Activated B cell treated with CpG ODN at 0.5 μM for 24 hours (primary cell): ENCODE measurements at regions of chr9 and their contacts with region 1.

Region 1: DNA sequence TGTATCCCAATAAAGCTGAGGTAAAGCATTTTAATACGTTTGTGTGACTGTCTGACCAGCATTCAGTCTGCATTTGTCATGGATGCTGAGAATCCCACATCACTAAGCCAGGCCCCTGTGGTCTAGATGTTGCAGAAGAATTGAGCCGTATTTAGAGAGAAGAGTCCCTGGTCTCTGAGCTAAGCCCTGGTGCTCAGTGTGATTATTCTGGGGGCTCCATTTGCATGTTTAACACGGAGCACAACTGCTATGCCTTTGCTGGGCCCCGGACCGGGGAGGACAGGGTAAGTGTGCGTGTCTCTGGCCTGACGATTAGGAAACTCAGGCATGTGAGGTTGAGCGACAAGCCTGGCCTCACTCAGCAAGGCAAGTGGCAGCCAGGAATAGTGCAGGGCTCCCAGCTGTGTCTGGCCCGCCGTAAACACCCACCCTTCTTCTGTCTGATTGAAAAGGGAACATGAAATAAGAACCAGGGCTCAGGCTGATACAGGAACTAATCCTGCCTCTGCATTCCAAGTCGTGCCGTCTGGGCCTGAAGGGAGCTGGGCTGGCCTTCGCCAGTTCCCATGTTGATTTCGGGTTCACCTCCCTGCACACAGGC is 22.3 kb downstream of the FAM78A start:
- DNase-seq: no peak
- ATAC-seq: peak; percentile 18
- H3K4me3 Mint-ChIP-seq: peak overlapping the region; percentile 72
- H3K27ac Mint-ChIP-seq: peak overlapping the region; percentile 100
- H3K4me1 Mint-ChIP-seq: peaks cover 50% of the 10 kb centered on the region
- H3K27me3 Mint-ChIP-seq: no peaks in the 10 kb centered on the region
- CTCF ChIP-seq: no peak

Region 2: GRCh38 chr9:131237931-131238401 is 16.0 kb before region 1 on chr9:
- CTCF ChIA-PET with region 1: interaction called, 3 read pairs
- POLR2A ChIA-PET with region 1: interaction called, 128 read pairs
- intact Hi-C with region 1: loop called (anchors 1 kb)
- DNase-seq: peak; percentile 58
- ATAC-seq: peak; percentile 97
- H3K4me3 Mint-ChIP-seq: peak overlapping the region; percentile 87
- H3K27ac Mint-ChIP-seq: peak overlapping the region; percentile 96
- H3K4me1 Mint-ChIP-seq: peaks cover 17% of the 10 kb centered on the region
- H3K27me3 Mint-ChIP-seq: no peaks in the 10 kb centered on the region
- CTCF ChIP-seq: no peak

Region 3: GRCh38 chr9:131270171-131271015 is 16.4 kb after region 1 on chr9:
- CTCF ChIA-PET with region 1: interaction called, 9 read pairs
- POLR2A ChIA-PET with region 1: interaction called, 593 read pairs
- intact Hi-C with region 1: loop called (anchors 1 kb)
- DNase-seq: peak; percentile 40
- ATAC-seq: peak; percentile 13
- H3K4me3 Mint-ChIP-seq: peak overlapping the region; percentile 76
- H3K27ac Mint-ChIP-seq: peak overlapping the region; percentile 98
- H3K4me1 Mint-ChIP-seq: peaks cover 88% of the 10 kb centered on the region
- H3K27me3 Mint-ChIP-seq: no peaks in the 10 kb centered on the region
- CTCF ChIP-seq: no peak

Region 4: DNA sequence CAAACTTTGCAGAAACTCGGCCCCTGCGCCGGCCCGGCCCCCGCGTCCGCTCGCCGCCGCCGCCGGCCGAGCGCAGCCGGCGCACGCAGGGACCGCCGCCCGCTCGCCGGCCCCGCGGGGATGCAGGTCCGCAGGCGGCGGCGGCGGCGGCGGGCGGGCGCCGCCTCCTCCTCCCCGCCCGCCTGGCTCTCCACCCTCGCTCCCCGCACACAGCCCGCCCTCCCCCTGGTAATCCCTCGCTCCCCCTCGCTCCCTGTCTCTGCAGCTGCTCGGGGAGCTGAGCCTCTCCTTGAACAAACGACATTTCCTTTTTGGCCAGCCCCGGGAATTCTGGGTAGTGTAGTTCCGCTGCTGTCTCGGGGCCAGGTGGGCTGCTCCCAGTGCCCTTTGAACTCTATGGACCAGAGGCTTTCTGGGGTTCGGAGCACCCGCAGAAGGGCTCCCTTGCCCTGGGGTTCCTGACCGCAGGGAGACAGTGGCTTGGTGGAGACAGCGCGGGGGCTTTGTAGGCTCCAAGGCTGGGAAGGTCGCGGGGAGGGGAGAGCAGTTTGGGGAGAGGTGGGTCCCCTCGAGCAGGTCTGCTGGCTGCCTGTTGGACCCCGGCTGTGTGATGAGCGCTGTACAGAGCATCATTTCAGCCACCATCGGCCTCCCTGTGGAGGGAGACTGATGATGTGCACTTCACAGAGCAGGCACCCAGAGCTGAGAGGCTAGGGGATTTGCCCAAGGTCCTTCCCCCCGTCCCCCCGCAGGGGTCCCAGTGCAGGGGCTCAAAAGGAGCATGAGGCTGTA is 24.1 kb after region 1 on chr9:
- CTCF ChIA-PET with region 1: interaction called, 7 read pairs
- POLR2A ChIA-PET with region 1: interaction called, 593 read pairs
- intact Hi-C with region 1: loop called (anchors 1 kb)
- DNase-seq: peak; percentile 48
- ATAC-seq: peak; percentile 48
- H3K4me3 Mint-ChIP-seq: peak overlapping the region; percentile 91
- H3K27ac Mint-ChIP-seq: peak overlapping the region; percentile 80
- H3K4me1 Mint-ChIP-seq: peaks cover 37% of the 10 kb centered on the region
- H3K27me3 Mint-ChIP-seq: peaks cover 12% of the 10 kb centered on the region
- CTCF ChIP-seq: no peak

Region 5: GRCh38 chr9:131370638-131371037 is 116.6 kb after region 1 on chr9:
- CTCF ChIA-PET with region 1: no interaction called
- POLR2A ChIA-PET with region 1: interaction called, 19 read pairs
- intact Hi-C with region 1: no loop called
- DNase-seq: no peak
- ATAC-seq: no peak
- H3K4me3 Mint-ChIP-seq: no peak overlapping the region
- H3K27ac Mint-ChIP-seq: no peak overlapping the region
- H3K4me1 Mint-ChIP-seq: peaks cover 22% of the 10 kb centered on the region
- H3K27me3 Mint-ChIP-seq: no peaks in the 10 kb centered on the region
- CTCF ChIP-seq: no peak

Region 6: DNA sequence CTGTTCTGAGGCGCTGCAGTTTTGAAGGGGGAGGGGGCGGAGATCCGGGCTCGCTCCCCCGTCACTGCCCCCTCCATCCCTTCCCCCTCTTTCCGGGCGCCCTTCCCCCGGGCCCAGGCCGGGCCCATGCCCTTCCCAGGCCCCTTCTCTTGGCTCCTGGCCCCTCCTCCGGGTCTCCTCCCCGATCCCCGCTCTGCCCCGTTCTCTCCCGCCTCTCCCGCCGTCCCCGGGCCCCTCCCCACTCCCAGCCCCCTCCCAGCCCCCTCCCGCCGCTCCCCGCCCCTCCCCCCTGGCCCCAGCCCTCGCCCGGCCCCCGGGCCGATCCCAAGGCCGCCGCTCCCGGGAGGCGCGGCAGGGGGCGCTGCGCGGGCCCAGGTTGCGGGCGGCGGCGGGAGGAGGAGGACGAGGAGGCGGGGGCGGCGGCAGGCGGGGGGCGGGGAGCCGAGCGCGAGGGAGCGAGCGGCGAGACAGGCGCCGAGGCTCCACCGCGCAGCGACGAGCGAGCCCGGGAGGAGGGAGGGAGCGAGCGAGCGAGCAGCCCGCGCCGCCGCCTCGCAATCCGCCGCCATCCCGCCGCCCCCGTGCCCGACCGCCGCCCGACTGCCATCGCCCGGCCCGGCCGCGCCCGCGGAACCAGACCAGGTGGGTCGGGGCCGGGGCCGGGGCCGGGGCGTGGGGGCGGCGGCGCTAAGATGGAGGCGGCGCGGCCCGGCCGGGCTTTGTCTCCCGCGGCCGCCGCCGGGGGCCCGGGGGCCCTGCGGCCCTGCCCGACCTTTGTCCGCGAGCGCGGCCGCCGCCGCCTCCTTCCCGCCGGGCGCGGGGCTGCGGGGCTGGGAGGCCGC is 139.9 kb after region 1 on chr9 and contains the start of gene PRRC2B:
- CTCF ChIA-PET with region 1: no interaction called
- POLR2A ChIA-PET with region 1: no interaction called
- intact Hi-C with region 1: no loop called
- DNase-seq: peak; percentile 91
- ATAC-seq: peak; percentile 61
- H3K4me3 Mint-ChIP-seq: peak within 1 kb of the TSS; percentile 90
- H3K27ac Mint-ChIP-seq: peak within 1 kb of the TSS; percentile 97
- H3K4me1 Mint-ChIP-seq: peaks cover 47% of the 10 kb centered on the region
- H3K27me3 Mint-ChIP-seq: no peaks in the 10 kb centered on the region
- CTCF ChIP-seq: no peak
- total RNA-seq, gene PRRC2B: 170 and 206 TPM in 2 replicates